WTC11 (cell line): ENCODE measurements at regions of chr5 and their contacts with region 1.

Region 1: DNA sequence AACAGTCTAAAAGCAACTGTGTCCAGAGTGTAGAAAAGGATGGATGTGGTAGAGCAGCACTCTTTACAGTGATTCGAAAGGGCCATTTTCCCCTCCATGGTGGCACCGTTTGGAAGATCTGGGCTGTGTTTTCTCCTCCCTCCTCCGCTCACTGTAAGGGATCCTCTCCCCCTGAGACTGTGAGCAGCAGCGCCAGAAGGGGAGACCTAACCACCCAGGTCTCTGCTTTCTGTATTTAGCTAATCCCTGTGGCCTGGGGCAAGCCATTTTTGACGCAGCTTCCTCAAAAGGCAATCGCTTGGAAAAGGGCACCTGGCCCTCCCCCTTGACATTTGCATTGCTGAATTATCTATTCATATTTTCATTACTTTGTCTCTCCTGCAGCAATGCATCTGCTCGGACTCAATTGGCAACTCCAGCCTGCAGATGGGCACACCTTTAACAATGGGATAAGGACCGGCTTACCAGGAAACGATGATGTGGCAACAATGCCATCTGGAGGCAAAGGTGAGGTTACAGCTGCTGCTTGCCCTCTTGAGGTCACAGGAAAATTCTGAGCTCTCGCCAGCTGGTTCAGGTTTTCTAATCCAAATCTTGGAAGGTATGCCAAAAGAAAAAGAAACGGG is 244.3 kb upstream of the WWC1 start:
- DNase-seq: peak; percentile 72
- ATAC-seq: peak; percentile 93
- H3K4me3 Mint-ChIP-seq: 0 out of 2 replicates have a peak overlapping the region, but pooled peaks have one; percentile 13
- H3K27ac Mint-ChIP-seq: no peak overlapping the region; the same call in 1 of the 2 replicates
- H3K4me1 Mint-ChIP-seq: peaks cover 25% of the 10 kb centered on the region
- H3K27me3 Mint-ChIP-seq: no peaks in the 10 kb centered on the region
- CTCF ChIP-seq: no peak; the same call in 1 of the 2 replicates

Region 2: DNA sequence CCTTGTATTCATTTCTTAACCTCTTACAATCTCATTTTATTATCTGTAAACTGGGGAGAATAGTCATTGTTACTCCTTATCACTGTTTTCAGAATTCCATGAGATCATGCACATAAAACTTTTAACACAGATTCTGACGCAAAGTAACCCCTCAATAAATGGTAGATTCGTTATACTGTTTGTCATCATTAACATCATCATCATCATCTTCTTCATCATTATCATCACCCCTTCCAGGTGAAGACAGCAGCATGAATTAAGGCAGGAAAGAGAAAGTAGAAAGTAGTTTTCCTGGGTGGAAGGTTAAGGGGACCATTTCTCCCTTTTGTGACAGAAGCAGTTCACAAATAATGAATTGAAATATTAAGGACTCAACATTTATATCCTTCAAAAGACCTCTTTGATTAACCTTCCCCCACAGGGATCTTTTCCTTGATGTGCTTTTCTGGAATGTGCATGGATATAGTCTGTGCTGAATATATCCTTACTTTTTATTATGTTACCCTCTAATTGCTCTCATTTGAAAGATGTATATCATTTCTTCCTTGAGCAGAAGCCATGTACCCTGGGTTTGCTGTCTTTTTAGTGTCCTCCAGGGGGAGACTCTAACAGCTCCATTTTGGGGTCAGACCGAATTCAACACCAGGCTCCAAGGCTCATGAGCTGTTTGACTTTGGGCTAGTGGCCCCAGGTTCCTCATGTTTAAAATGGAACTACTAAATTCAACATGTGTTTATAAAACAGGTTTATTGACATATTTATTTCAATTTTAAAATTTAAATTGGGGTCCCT is 785.7 kb before region 1 on chr5:
- CTCF ChIA-PET with region 1: interaction called, 14 read pairs
- POLR2A ChIA-PET with region 1: no interaction called
- DNase-seq: no peak
- ATAC-seq: peak; percentile 75
- H3K4me3 Mint-ChIP-seq: no peak overlapping the region
- H3K27ac Mint-ChIP-seq: no peak overlapping the region
- H3K4me1 Mint-ChIP-seq: no peaks in the 10 kb centered on the region
- H3K27me3 Mint-ChIP-seq: no peaks in the 10 kb centered on the region
- CTCF ChIP-seq: peak; percentile 51; the same call in 1 of the 2 replicates

Region 3: DNA sequence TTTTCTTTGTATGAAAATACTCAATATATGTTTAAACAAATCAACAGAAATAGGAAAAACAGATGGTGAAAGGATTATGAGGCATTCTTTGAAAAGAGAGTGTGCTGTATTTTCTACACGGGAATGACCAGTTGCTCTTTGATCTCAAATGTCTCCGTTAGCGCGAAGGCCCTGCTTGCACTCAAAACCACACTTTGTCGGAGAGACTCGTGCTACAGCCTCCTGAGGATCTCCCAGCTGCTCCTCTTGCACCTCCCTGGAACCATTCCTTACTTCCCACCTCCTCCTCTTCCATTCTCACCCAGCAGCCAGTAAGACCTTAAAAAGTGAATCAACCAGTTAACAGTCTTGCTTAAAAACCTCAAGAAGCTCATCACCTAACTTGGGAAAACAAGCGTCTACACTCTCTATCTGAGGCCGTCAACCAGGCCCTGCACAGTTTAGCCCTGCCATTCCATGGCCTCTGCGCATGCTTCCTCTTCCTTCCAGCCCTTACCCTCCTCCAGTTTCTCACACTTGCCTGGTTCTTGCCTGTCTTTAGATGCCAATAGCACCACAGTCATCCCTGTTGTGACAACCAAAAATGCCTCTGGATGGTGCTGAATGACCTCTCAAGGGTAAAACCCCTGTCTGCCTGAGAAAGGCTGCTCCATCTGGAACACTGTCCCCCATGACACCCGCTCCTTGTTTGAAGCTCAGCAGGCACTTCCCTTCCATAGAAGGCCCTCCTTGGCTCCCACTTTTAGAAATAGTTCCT is 350.4 kb before region 1 on chr5:
- CTCF ChIA-PET with region 1: interaction called, 11 read pairs
- POLR2A ChIA-PET with region 1: interaction called, 5 read pairs
- DNase-seq: no peak
- ATAC-seq: peak; percentile 16
- H3K4me3 Mint-ChIP-seq: no peak overlapping the region
- H3K27ac Mint-ChIP-seq: peak overlapping the region; percentile 25
- H3K4me1 Mint-ChIP-seq: peaks cover 43% of the 10 kb centered on the region
- H3K27me3 Mint-ChIP-seq: no peaks in the 10 kb centered on the region
- CTCF ChIP-seq: no peak

Region 4: GRCh38 chr5:167723254-167723871 is 323.8 kb before region 1 on chr5:
- CTCF ChIA-PET with region 1: interaction called, 29 read pairs
- POLR2A ChIA-PET with region 1: no interaction called
- DNase-seq: peak; percentile 79
- ATAC-seq: peak; percentile 89
- H3K4me3 Mint-ChIP-seq: no peak overlapping the region
- H3K27ac Mint-ChIP-seq: no peak overlapping the region
- H3K4me1 Mint-ChIP-seq: peaks cover 48% of the 10 kb centered on the region
- H3K27me3 Mint-ChIP-seq: peaks cover 6% of the 10 kb centered on the region
- CTCF ChIP-seq: peak; percentile 93

Region 5: GRCh38 chr5:167736992-167737391 is 310.2 kb before region 1 on chr5:
- CTCF ChIA-PET with region 1: no interaction called
- POLR2A ChIA-PET with region 1: no interaction called
- DNase-seq: no peak
- ATAC-seq: no peak
- H3K4me3 Mint-ChIP-seq: no peak overlapping the region
- H3K27ac Mint-ChIP-seq: 0 out of 2 replicates have a peak overlapping the region, but pooled peaks have one; percentile 32
- H3K4me1 Mint-ChIP-seq: peaks cover 5% of the 10 kb centered on the region
- H3K27me3 Mint-ChIP-seq: no peaks in the 10 kb centered on the region; the same call in 1 of the 2 replicates
- CTCF ChIP-seq: no peak

Region 6: GRCh38 chr5:168076561-168076991 is 29.4 kb after region 1 on chr5:
- CTCF ChIA-PET with region 1: interaction called, 16 read pairs
- POLR2A ChIA-PET with region 1: no interaction called
- DNase-seq: peak; percentile 79
- ATAC-seq: peak; percentile 97
- H3K4me3 Mint-ChIP-seq: no peak overlapping the region
- H3K27ac Mint-ChIP-seq: no peak overlapping the region
- H3K4me1 Mint-ChIP-seq: peaks cover 11% of the 10 kb centered on the region
- H3K27me3 Mint-ChIP-seq: peaks cover 14% of the 10 kb centered on the region
- CTCF ChIP-seq: peak; percentile 58